Ovary (tissue), 10 donors: ENCODE measurements at regions of chr6 and their contacts with region 1.

Region 1: DNA sequence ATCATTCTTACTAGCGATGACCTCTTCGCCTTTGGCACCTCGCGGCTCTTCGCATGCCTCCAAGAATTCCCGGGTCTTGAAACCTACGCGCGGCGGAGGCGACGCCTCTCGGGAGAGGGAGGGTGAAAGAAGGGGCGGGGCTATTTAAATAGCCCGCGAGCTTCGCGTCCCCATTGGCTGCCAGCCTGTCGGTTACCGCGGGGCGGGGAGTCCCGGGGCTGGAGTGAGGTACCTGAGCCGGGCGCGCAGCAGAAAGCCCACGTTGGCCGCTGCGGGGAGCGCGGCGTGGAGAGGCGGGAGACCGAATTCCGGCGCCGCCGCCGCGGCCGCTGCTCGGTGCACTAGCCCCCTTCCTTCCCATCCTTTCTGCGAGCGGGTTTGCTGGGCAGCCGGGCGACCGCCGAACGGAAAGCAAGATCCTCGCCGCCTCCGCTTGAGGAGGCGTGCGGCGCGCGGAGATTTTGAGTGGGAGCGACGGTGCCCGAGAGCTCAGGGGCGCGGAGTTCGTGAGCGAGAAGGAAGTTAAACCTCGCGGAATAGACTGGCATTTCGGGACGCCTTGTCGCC is at the start of gene BMP6:
- DNase-seq: peak; percentile 87 to 92 (median 91)
- H3K4me3 ChIP-seq: peak within 1 kb of the TSS; percentile 44
- H3K27ac ChIP-seq: no peak within 1 kb of the TSS
- H3K4me1 ChIP-seq: peaks cover 4% of the 10 kb centered on the region
- H3K27me3 ChIP-seq: no peaks in the 10 kb centered on the region
- CTCF ChIP-seq: peak in 1 of 3 donors; percentile 18
- EP300 ChIP-seq: no peak
- POLR2A ChIP-seq: no peak
- total RNA-seq, gene BMP6: 3.4 to 15.9 (median 6.7) TPM

Region 2: DNA sequence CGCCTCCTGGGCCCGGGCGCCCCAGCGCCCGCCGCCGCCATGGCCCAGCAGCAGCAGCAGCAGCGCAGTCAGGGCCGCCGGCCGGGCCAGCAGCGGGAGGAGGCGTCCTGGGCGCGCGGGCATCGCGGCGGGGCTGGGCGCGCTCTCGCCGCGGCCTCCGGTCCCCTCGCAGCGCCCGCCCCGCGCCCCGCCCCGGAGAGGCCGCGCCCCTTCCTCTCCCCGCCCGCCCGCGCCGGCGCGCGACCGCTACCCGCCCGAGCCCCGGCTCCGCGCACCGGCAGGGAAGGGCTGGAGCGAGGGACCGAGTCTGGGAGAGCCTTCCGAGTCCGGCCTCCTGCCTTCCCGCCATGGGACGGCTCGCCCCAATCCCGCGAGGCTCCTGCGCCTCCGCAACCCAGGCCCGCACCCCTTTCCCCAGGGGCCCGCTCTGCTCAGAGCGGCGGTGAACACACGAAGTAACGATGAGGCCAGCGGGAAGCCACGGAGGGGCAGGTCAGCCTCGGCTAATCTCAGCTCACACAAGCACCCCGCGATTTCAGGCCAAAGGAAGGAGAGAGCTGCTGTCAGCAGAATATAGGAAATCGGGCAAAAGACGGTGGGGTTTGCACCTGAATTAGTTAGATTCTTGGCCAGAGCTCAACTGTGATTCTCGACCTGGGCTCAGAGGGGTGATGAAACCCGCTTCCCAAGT is 184.9 kb after region 1 on chr6 and contains the start of gene TXNDC5:
- intact Hi-C with region 1: loop called in 2 of 4 experiments (anchors 5 to 10 kb)
- DNase-seq: peak; percentile 72 to 87 (median 79)
- H3K4me3 ChIP-seq: peak within 1 kb of the TSS; percentile 44
- H3K27ac ChIP-seq: peak within 1 kb of the TSS; percentile 26 to 62
- H3K4me1 ChIP-seq: peaks cover 4% of the 10 kb centered on the region
- H3K27me3 ChIP-seq: no peaks in the 10 kb centered on the region
- CTCF ChIP-seq: no peak
- EP300 ChIP-seq: no peak
- POLR2A ChIP-seq: no peak
- total RNA-seq, gene TXNDC5: 88.0 to 146 (median 107) TPM

Region 3: DNA sequence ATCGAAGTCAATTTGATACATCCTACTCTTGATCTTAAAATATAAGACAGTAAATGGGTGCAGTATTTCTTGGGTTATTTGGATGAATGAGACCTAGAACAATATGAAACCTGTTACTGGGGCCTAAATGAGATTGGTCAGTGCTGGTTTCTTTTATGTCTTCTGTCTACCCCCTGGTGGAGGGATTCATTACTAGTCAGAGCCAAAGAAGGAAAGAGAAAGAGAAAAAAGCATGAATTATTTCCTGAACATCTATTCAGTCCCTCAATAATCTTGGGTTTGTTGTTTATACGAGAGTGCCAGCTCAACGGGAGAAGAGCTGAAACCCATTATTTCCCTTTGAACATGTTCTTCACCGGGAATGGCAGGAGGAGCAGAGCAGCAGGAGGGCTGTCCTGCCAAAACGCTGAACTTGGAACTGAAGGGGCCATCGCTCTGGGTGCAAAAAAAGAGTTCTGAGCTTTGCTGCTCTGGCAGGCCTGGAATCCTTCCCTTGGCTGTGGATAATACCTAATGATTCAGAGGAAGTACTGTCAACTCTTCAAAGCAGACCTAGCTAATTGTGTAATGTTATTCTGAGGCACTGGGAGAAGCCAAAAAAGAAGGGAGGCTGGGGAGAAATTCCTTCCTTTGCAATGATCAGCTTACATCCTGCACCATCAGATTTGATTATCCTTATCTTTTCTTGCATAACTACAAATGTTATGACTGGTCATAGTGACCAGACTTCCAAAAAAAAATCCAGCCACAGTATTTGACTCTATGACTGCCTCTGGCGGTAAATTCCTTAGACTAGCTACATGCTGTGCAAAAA is 266.3 kb after region 1 on chr6:
- intact Hi-C with region 1: loop called in 3 of 4 experiments (anchors 5 to 10 kb)
- DNase-seq: peak in 2 of 5 donors; percentile 28 to 40
- H3K4me3 ChIP-seq: no peak overlapping the region
- H3K27ac ChIP-seq: no peak overlapping the region
- H3K4me1 ChIP-seq: peaks cover 3% of the 10 kb centered on the region
- H3K27me3 ChIP-seq: no peaks in the 10 kb centered on the region
- CTCF ChIP-seq: peak in 2 of 3 donors; percentile 32 to 36
- EP300 ChIP-seq: no peak
- POLR2A ChIP-seq: no peak

Region 4: GRCh38 chr6:8059129-8059528 is 333.2 kb after region 1 on chr6:
- intact Hi-C with region 1: loop called in 2 of 4 experiments (anchors 5 to 10 kb)
- DNase-seq: no peak
- H3K4me3 ChIP-seq: no peak overlapping the region
- H3K27ac ChIP-seq: no peak overlapping the region
- H3K4me1 ChIP-seq: no peaks in the 10 kb centered on the region
- H3K27me3 ChIP-seq: no peaks in the 10 kb centered on the region
- CTCF ChIP-seq: peak in 1 of 3 donors; percentile 17
- EP300 ChIP-seq: no peak
- POLR2A ChIP-seq: no peak